ENCODE measurements at regions of chr11 and their contacts with region 1.

Region 1: GRCh38 chr11:447923-448731 is 2.0 kb upstream of the PTDSS2 start:
- DNase-seq: peak; percentile 97
- H3K4me3 Mint-ChIP-seq: peak overlapping the region; percentile 90
- H3K27ac Mint-ChIP-seq: peak overlapping the region; percentile 95
- H3K4me1 Mint-ChIP-seq: peaks cover 21% of the 10 kb centered on the region
- H3K27me3 Mint-ChIP-seq: peaks cover 2% of the 10 kb centered on the region

Region 2: DNA sequence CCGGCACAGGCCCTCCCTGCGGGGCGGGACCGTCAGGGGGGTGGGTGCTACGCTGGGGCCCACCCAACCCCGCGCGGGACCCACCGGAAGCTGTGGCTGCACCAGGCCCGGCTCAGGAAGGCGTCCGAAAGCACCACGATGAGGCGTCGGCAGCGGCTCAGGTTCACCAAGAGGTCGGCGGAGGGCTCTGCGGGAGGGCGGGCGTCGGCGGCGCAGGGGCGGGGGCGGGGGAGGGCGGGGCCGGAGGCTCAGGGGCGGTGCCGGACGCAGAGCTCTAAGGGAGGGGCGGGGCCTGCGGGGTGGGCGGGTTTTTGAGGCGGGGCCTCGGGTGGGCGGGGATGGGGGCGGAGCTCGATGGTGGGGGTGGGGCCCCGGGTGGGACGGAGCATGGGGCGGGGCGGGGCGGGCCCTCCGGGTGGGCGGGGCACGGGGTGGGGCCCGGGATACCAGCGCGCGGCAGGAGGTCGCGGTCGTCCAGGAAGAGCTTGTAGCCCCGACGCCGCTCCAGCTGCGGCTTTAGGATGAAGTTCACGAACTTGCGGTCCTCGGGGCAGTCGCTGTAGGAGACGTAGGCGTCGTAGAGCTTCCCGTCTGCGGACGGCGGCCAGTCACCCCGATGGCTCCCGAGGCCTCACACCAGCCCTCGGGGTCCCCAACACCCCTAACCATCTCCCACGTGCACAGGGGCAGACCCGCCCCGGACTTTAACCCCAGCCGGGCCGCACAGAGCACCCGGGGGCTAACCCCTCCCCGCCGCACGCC is 41.0 kb before region 1 on chr11:
- CTCF ChIA-PET with region 1: interaction called, 49 read pairs
- POLR2A ChIA-PET with region 1: interaction called, 15 read pairs
- intact Hi-C with region 1: loop called (anchors 2 kb)
- DNase-seq: peak; percentile 94
- H3K4me3 Mint-ChIP-seq: peak overlapping the region; percentile 46
- H3K27ac Mint-ChIP-seq: no peak overlapping the region
- H3K4me1 Mint-ChIP-seq: peaks cover 5% of the 10 kb centered on the region
- H3K27me3 Mint-ChIP-seq: no peaks in the 10 kb centered on the region

Region 3: DNA sequence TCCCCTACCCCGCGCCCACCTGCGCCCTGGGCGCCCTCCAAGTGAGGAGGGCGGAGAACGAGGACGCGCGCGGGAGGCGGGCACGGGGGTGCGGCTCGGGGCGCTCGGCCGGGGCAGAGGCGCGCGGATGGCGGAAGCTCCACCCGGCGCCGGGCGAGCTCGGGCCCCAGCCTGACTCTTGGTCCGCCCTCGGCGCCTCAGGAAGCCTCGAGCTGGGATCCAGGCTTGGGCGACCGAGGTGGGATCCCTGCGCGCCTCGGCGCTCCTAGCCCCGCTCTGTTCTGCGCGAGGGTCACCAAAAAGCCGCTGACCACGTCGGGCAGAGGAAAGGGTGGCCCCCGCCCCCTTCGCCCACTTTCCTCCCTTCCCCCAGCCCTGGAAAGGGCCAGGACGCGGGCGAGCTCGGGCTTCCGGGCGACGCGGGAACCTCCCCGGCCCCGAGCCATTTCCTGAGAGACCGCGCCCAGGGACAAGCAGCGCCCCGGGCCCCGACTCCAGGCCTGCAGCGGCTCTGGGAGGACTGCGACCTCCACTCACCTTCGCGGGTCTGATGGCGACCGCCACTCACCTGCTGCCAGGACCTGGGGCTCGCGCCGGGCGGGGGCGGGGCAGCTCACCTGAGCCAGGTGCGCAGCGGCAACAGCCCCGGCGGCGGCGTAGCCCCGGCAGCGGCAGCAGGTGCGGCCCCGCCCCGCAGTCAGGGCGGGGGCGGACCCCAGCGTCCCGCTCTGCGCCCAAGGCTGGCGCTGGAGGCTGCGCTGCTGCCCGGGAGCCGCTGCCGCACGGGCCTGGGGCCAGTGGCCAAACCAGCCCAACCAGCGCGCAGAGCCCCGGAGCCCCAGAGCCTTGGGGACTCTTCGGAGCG is 31.1 kb before region 1 on chr11:
- CTCF ChIA-PET with region 1: interaction called, 17 read pairs
- POLR2A ChIA-PET with region 1: interaction called, 11 read pairs
- intact Hi-C with region 1: loop called (anchors 2 kb)
- DNase-seq: peak; percentile 57
- H3K4me3 Mint-ChIP-seq: peak overlapping the region; percentile 83
- H3K27ac Mint-ChIP-seq: no peak overlapping the region
- H3K4me1 Mint-ChIP-seq: peaks cover 25% of the 10 kb centered on the region
- H3K27me3 Mint-ChIP-seq: no peaks in the 10 kb centered on the region

Region 4: GRCh38 chr11:528166-528814 is 80.2 kb after region 1 on chr11:
- CTCF ChIA-PET with region 1: no interaction called
- POLR2A ChIA-PET with region 1: no interaction called
- intact Hi-C with region 1: no loop called
- DNase-seq: no peak
- H3K4me3 Mint-ChIP-seq: no peak overlapping the region
- H3K27ac Mint-ChIP-seq: no peak overlapping the region
- H3K4me1 Mint-ChIP-seq: no peaks in the 10 kb centered on the region
- H3K27me3 Mint-ChIP-seq: no peaks in the 10 kb centered on the region

Measured in activated CD4-positive, alpha-beta memory T cell treated with anti-CD3 and anti-CD28 coated beads for 36 hours (primary cell).